OCI-LY7 (cell line): ENCODE measurements at regions of chr5 and their contacts with region 1.

Region 1: DNA sequence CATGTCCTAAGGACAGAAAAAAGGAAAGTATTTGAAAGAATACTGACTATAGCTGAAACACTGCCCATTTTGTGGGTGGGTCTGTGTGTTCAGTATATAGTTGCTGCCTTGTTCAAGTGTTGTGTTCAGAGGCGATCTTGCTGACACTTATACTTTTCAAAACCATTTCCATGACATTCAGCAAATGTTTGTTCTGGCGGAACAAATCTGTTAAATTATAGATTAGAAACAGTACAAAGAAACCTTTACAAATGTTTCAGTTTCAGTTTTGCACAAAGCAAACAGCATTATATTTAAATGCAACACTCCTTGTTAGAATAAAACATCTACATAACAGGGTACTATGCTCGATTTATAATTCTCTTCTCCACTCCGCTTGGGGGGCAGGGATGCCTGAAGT is 2276.3 kb downstream of the MAT2B start:
- DNase-seq: no peak
- H3K4me3 ChIP-seq: no peak overlapping the region
- H3K27ac ChIP-seq: no peak overlapping the region
- H3K4me1 ChIP-seq: no peaks in the 10 kb centered on the region
- CTCF ChIP-seq: no peak

Region 2: DNA sequence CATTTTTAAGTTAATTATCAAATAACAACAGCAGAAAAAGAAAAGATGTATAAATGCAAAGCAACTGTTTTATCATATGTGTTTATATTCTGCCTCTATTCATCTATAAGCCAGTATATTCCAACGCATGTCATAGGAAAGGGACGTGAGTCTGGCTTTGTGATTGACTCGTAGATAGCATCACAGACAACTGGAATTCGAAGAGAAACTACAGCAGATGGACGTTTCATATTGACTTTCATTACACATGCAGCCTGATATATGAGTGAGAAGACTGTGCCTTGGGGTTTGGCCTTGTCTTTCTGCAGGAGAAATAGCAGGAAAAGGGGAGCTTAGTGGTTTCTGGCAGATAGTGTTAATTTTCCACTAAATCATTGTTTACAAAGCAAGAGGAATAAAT is 1164.4 kb before region 1 on chr5:
- CTCF ChIA-PET with region 1: no interaction called
- POLR2A ChIA-PET with region 1: interaction called, 10 read pairs
- intact Hi-C with region 1: no loop called
- DNase-seq: no peak
- H3K4me3 ChIP-seq: no peak overlapping the region
- H3K27ac ChIP-seq: no peak overlapping the region
- H3K4me1 ChIP-seq: no peaks in the 10 kb centered on the region
- CTCF ChIP-seq: no peak

Region 3: DNA sequence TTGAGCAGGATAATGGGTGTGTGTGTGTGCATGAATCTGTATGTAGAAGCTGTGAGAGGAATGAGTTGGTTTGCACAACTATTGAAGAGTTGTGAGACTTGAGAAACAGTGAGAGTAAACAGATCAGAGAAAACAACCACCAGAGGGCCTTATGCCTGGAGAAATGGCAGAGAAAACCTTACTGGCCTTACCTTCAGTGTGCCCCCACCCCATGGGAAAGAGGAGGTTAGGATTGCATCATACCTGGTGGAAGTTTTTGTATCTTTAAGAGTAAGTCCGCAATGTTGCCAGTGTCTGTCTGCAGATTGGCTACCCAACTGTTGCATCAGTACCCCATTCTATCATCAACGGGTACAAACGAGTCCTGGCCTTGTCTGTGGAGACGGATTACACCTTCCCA is 600.3 kb after region 1 on chr5:
- CTCF ChIA-PET with region 1: no interaction called
- POLR2A ChIA-PET with region 1: no interaction called
- intact Hi-C with region 1: no loop called
- DNase-seq: no peak
- H3K4me3 ChIP-seq: no peak overlapping the region
- H3K27ac ChIP-seq: no peak overlapping the region
- H3K4me1 ChIP-seq: no peaks in the 10 kb centered on the region
- CTCF ChIP-seq: no peak